B cell (primary cell): ENCODE measurements at regions of chr12 and their contacts with region 1.

Region 1: GRCh38 chr12:56688129-56688845 is at the start of gene PTGES3:
- DNase-seq: peak; percentile 99
- ATAC-seq: peak; percentile 80
- H3K4me3 ChIP-seq: peak within 1 kb of the TSS; percentile 72 to 99 (median 92)
- H3K4me3 Mint-ChIP-seq: peak within 1 kb of the TSS; percentile 97
- H3K27ac ChIP-seq: peak within 1 kb of the TSS; percentile 95
- H3K27ac Mint-ChIP-seq: peak within 1 kb of the TSS; percentile 98
- H3K4me1 ChIP-seq: peaks cover 29 to 44% of the 10 kb centered on the region in 2 donors
- H3K4me1 Mint-ChIP-seq: peaks cover 35% of the 10 kb centered on the region
- H3K27me3 ChIP-seq: no peaks in the 10 kb centered on the region
- H3K27me3 Mint-ChIP-seq: no peaks in the 10 kb centered on the region
- CTCF ChIP-seq: no peak
- total RNA-seq, gene PTGES3: 121 and 124 TPM in 2 replicates

Region 2: DNA sequence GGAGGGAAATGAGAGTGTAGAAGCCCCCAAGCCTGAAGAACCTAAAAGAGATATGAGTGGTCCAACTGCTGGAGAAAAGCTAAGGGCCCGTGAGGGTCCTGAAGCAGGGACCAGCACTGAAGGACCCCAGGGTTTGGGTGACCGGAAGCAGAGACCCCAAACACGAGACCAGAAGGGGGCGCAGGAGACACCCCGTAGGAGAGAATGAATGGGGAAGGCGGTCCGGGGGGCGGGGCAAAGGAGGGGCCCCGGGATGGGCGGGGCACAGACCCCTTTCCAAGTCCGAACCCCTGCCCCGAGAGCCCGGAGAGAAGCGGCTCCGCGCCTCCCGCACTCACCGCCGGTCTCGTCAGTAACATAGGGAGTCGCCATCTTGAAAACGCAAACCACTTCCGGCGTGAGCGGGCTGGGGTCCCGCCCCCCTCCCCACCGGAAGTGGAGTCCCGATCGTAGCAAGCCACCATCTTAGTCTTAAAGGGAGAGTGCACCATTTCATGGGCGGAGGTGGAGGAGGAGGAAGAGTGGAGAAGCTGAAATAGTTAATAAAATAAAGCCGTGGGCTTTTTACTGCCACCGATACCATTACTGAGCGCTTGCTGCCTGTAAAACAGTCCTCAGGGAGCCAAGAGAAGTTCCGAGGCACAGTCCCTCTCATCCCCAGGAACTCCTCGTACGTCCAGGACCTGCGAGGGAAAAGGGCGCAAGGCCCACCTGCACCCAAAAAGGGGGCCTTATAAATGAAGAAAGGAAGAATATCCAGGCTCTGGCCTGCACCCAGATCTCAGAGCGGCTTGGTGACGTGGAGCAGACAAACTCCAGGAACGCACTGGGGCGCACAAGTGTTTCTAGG is 761.3 kb before region 1 on chr12:
- CTCF ChIA-PET with region 1: no interaction called
- POLR2A ChIA-PET with region 1: no interaction called
- intact Hi-C with region 1: loop called (anchors 5 kb)
- DNase-seq: peak; percentile 94
- ATAC-seq: peak; percentile 50
- H3K4me3 ChIP-seq: peak overlapping the region; percentile 88 to 100 (median 98)
- H3K4me3 Mint-ChIP-seq: peak overlapping the region; percentile 94
- H3K27ac ChIP-seq: peak overlapping the region; percentile 67 to 92
- H3K27ac Mint-ChIP-seq: peak overlapping the region; percentile 97
- H3K4me1 ChIP-seq: peaks cover 33 to 45% of the 10 kb centered on the region in 2 donors
- H3K4me1 Mint-ChIP-seq: peaks cover 54% of the 10 kb centered on the region
- H3K27me3 ChIP-seq: no peaks in the 10 kb centered on the region
- H3K27me3 Mint-ChIP-seq: no peaks in the 10 kb centered on the region
- CTCF ChIP-seq: peak; percentile 87

Region 3: DNA sequence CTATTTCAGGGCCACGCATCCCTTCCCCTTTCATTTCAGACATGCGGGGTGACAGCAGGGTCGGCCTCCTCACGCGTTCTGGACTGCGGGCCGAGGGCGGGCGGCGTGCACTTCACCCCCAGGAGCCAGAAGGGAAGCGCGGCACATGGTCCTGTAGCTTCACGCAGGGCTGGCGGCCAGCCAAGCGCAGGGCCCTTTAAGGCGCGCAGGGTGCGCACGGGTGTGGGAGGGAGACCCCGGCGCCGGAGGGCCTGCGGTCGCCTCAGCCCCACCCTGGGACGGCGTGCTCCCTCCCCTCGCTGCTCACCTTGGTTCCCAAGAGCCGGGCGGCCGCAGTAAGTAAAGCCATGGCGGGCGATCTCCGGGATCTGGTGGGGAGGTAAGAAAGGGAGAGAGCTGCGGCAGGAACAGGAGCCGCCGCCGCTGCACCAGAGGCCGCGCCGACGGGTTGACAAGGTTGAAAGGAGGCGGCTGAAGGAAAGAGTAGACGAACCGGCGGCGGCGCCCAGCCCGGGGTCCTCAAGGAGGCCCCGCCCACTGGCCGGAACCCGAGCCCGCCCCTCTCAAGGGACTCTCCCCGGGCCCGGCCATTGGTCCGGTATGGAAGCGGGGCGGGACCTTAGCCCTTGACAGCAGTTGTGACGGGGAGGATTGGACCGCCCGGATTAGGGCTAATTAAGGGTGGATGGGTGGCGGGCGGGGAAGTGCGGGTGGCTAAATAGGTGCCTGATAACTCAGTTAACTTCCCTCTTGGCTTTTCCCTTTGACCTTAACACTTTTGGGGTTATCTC is 388.2 kb before region 1 on chr12 and contains the start of gene CS:
- CTCF ChIA-PET with region 1: no interaction called
- POLR2A ChIA-PET with region 1: interaction called, 10 read pairs
- intact Hi-C with region 1: no loop called
- DNase-seq: peak; percentile 98
- ATAC-seq: peak; percentile 96
- H3K4me3 ChIP-seq: peak within 1 kb of the TSS; percentile 78 to 91 (median 83)
- H3K4me3 Mint-ChIP-seq: peak within 1 kb of the TSS; percentile 98
- H3K27ac ChIP-seq: peak within 1 kb of the TSS; percentile 92 to 95
- H3K27ac Mint-ChIP-seq: peak within 1 kb of the TSS; percentile 97
- H3K4me1 ChIP-seq: peaks cover 51 to 61% of the 10 kb centered on the region in 2 donors
- H3K4me1 Mint-ChIP-seq: peaks cover 57% of the 10 kb centered on the region
- H3K27me3 ChIP-seq: no peaks in the 10 kb centered on the region
- H3K27me3 Mint-ChIP-seq: no peaks in the 10 kb centered on the region
- CTCF ChIP-seq: no peak
- total RNA-seq, gene CS: 151 and 154 TPM in 2 replicates

Region 4: DNA sequence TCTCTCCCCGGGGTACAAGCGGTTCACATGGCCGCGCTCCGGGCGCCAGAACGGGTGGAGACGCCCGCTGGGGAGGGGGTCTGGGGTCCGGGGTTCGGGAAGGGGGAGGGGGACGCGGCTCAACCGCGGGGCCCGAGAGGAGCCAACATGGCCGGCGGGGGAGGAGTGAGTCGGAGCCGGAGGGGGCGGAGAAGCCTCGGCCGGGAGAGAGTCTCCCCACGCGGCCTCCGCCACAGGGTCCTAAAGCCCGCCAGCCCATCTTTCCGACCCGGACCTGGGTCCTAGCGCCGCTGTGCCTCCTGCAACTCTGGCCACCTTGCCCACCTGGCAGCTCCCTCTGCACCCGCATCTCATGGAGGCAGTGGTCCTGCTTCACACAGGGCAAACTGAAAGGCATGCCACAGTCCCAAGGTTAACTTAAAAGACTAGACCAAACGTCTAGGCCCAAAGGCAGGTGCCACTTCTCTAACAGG is 58.1 kb before region 1 on chr12 and contains the start of gene BAZ2A:
- CTCF ChIA-PET with region 1: interaction called, 21 read pairs
- POLR2A ChIA-PET with region 1: interaction called, 5 read pairs
- intact Hi-C with region 1: loop called (anchors 1 kb)
- DNase-seq: peak; percentile 84
- ATAC-seq: peak; percentile 65
- H3K4me3 ChIP-seq: peak within 1 kb of the TSS; percentile 98 to 100 (median 99)
- H3K4me3 Mint-ChIP-seq: peak within 1 kb of the TSS; percentile 89
- H3K27ac ChIP-seq: peak within 1 kb of the TSS; percentile 97 to 98
- H3K27ac Mint-ChIP-seq: peak within 1 kb of the TSS; percentile 92
- H3K4me1 ChIP-seq: peaks cover 63 to 73% of the 10 kb centered on the region in 2 donors
- H3K4me1 Mint-ChIP-seq: peaks cover 78% of the 10 kb centered on the region
- H3K27me3 ChIP-seq: no peaks in the 10 kb centered on the region
- H3K27me3 Mint-ChIP-seq: no peaks in the 10 kb centered on the region
- CTCF ChIP-seq: no peak
- total RNA-seq, gene BAZ2A: 280 and 284 TPM in 2 replicates

Region 5: DNA sequence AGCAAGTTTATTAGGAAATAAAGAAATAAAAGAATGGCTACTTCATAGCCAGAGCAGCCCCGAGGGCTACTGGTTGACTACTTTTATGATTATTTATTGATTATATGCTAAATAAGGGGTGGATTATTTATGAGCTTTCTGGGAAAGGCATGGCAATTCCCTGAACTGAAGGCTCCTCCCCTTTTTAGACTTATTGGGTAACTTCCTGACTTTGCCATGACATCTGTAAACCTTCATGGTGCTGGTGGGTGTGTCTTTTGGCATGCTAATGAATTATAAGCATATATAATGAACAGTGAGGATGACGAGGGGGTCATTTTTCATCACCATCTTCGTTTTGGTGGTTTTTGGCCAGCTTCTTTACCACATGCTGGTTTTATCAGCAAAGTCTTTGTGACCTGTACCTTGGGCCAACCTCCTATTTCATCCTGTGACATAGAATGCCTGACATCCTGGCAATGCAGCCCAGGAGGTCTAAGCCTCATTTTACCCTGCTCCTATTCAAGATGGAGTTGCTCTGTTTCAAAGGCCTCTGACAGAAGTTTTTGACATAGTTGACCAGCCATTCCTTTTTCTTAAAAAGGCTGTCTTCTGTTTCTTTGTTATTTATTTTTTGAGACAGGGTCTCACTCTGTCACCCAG is 10.9 kb after region 1 on chr12:
- CTCF ChIA-PET with region 1: no interaction called
- POLR2A ChIA-PET with region 1: no interaction called
- intact Hi-C with region 1: no loop called
- DNase-seq: no peak
- ATAC-seq: no peak
- H3K4me3 ChIP-seq: no peak overlapping the region
- H3K4me3 Mint-ChIP-seq: no peak overlapping the region
- H3K27ac ChIP-seq: no peak overlapping the region
- H3K27ac Mint-ChIP-seq: no peak overlapping the region
- H3K4me1 ChIP-seq: peaks cover 5 to 6% of the 10 kb centered on the region in 2 donors
- H3K4me1 Mint-ChIP-seq: peaks cover 5% of the 10 kb centered on the region
- H3K27me3 ChIP-seq: no peaks in the 10 kb centered on the region
- H3K27me3 Mint-ChIP-seq: peaks cover 3% of the 10 kb centered on the region
- CTCF ChIP-seq: no peak

Region 6: DNA sequence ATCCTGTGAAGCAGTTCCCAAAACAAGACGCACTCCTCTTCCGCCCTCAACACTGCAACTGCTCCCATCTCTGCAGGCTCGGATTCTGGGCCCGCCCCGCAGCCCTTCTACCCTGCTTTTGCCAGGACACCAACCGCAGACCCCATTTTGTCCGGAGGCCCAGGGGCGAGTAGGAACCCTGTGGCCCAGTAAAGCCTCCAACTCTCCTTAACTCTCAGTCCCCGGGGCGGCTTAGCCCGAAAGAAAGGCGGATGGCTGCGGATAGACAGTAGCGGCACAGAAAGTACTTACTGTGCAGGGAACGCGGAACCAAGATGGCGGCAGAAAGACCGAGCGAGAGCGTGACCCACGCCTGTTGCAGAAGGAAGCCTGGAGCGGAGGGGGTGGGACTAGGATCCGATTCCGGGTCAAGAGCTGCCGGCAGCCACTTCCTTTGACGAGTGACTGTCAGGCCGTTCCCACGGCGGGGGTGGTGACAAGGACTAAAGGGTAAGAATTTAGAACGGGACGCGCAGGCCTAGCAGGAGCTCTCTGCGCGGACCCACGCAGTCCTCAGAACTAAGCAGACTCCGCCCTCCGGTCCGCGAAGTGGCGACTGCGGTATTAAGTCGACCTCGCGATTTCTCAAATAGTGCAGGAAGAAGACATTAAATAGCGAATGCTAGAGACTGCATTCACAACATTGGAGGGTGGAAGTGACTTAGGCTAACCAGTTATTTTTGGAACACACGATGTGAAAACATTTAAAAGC is 36.9 kb after region 1 on chr12 and contains the start of gene NACA:
- CTCF ChIA-PET with region 1: interaction called, 3 read pairs
- POLR2A ChIA-PET with region 1: interaction called, 25 read pairs
- intact Hi-C with region 1: loop called (anchors 1 kb)
- DNase-seq: peak; percentile 98
- ATAC-seq: peak; percentile 95
- H3K4me3 ChIP-seq: peak within 1 kb of the TSS; percentile 76 to 99 (median 90)
- H3K4me3 Mint-ChIP-seq: peak within 1 kb of the TSS; percentile 95
- H3K27ac ChIP-seq: peak within 1 kb of the TSS; percentile 81 to 92
- H3K27ac Mint-ChIP-seq: peak within 1 kb of the TSS; percentile 95
- H3K4me1 ChIP-seq: peaks cover 47 to 49% of the 10 kb centered on the region in 2 donors
- H3K4me1 Mint-ChIP-seq: peaks cover 59% of the 10 kb centered on the region
- H3K27me3 ChIP-seq: no peaks in the 10 kb centered on the region
- H3K27me3 Mint-ChIP-seq: no peaks in the 10 kb centered on the region
- CTCF ChIP-seq: no peak
- total RNA-seq, gene NACA: 993 and 1,076 TPM in 2 replicates

Region 7: DNA sequence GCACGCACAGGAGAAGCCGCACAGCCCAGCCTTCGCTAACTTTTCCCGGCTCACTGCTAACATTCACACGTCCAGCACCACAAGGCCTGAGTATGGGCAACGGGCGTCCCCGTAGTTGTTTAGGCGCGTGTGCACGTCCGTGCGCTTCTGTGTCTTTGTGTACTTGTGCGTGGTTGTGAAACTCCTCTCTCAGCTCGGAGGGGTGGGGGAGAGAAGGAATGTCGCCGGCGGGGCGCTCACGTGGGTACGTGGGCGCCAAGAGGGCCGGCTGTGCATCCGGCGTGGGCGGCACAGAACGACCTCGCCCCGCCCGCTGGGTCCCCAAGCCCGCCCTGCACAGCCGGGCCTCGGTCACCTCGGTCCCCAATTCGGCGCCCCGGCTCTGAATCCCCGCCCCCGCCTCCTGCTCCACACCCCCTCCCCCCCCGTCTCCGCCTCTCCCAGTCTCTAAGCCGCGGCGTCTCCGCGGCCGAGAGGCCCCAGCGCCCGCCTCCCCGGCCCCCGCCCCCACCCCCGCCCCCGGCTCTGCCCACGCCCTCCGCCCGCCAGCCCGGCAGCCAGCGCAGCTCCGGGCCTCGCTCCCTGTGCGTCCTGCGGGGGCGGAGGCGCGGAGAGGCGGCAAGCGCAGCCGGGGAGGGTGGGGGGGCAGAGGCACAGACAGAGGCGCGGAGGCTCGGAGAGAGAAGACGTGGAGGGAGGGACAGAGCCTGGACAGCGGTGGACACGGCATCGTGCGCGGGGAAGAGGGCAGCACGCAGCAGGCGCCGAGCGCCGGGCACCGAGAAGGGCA is 400.4 kb after region 1 on chr12 and contains the start of gene NAB2:
- CTCF ChIA-PET with region 1: no interaction called
- POLR2A ChIA-PET with region 1: interaction called, 4 read pairs
- intact Hi-C with region 1: loop called (anchors 2 kb)
- DNase-seq: peak; percentile 96
- ATAC-seq: peak; percentile 62
- H3K4me3 ChIP-seq: peak within 1 kb of the TSS; percentile 75 to 100 (median 80)
- H3K4me3 Mint-ChIP-seq: peak within 1 kb of the TSS; percentile 92
- H3K27ac ChIP-seq: peak within 1 kb of the TSS; percentile 98 to 99
- H3K27ac Mint-ChIP-seq: peak within 1 kb of the TSS; percentile 91
- H3K4me1 ChIP-seq: peaks cover 18 to 40% of the 10 kb centered on the region in 2 donors
- H3K4me1 Mint-ChIP-seq: peaks cover 55% of the 10 kb centered on the region
- H3K27me3 ChIP-seq: no peaks in the 10 kb centered on the region
- H3K27me3 Mint-ChIP-seq: no peaks in the 10 kb centered on the region
- CTCF ChIP-seq: no peak
- total RNA-seq, gene NAB2: 49.0 and 52.1 TPM in 2 replicates

Region 8: GRCh38 chr12:57190037-57190436 is 501.8 kb after region 1 on chr12:
- CTCF ChIA-PET with region 1: no interaction called
- POLR2A ChIA-PET with region 1: no interaction called
- intact Hi-C with region 1: no loop called
- DNase-seq: no peak
- ATAC-seq: no peak
- H3K4me3 ChIP-seq: no peak overlapping the region
- H3K4me3 Mint-ChIP-seq: no peak overlapping the region
- H3K27ac ChIP-seq: no peak overlapping the region
- H3K27ac Mint-ChIP-seq: no peak overlapping the region
- H3K4me1 ChIP-seq: no peaks in the 10 kb centered on the region
- H3K4me1 Mint-ChIP-seq: no peaks in the 10 kb centered on the region
- H3K27me3 ChIP-seq: no peaks in the 10 kb centered on the region
- H3K27me3 Mint-ChIP-seq: no peaks in the 10 kb centered on the region
- CTCF ChIP-seq: no peak